Activated T-helper 1 cell treated with anti-CD3 and anti-CD28 coated beads, Interleukin-12 subunit alpha, Interleukin-12 subunit beta, Interleukin-2, Interleukin-4 antibody, amounts not matched to agents 30 ng/mL and 10 ng/mL and 1 ng/mL, durations not matched to agents 14 hours and 24 hours and 36 hours (primary cell): ENCODE measurements at regions of chr3 and their contacts with region 1.

Region 1: GRCh38 chr3:30437171-30437601 is 169.2 kb upstream of the TGFBR2 start:
- DNase-seq: no peak
- H3K4me3 Mint-ChIP-seq: no peak overlapping the region
- H3K27ac Mint-ChIP-seq: no peak overlapping the region
- H3K4me1 Mint-ChIP-seq: peaks cover 24% of the 10 kb centered on the region
- H3K27me3 Mint-ChIP-seq: no peaks in the 10 kb centered on the region

Region 2: GRCh38 chr3:30112902-30113484 is 324.2 kb before region 1 on chr3:
- intact Hi-C with region 1: loop called (anchors 10 kb)
- DNase-seq: no peak
- H3K4me3 Mint-ChIP-seq: no peak overlapping the region
- H3K27ac Mint-ChIP-seq: no peak overlapping the region
- H3K4me1 Mint-ChIP-seq: peaks cover 4% of the 10 kb centered on the region
- H3K27me3 Mint-ChIP-seq: peaks cover 12% of the 10 kb centered on the region

Region 3: DNA sequence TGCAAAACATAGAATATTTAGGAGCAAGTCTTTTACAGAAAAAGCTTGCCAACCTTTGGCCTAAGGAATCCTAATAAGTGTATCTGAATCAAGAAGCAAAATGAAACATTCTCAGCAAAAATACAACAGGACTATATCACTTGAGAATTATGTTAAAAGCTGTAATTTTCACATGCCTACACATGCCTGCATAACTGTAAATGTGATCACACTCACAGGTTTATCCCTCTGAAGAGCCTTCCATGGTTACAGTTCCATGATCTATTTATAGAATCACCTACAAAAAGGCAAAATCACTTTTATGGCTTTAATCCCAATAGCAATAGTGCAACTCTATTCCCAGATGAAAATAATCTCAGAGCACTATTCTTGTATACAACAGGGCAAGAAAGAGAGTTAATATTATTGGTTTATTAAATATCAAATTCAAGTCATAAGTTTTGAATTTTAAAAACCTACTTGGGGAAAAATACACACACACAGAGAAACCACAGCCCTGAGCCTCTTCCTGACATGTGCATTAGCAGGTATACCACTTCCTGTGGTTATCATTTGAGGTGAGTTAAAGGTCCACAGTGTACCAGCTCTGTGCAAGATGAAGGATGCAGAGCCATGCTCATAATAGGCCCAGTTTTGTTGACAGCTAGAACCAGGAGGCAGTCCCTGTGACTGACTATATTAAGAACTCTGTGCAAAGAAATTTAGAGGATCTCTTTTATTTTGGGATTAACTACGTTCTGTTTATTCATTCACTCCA is 83.3 kb before region 1 on chr3:
- intact Hi-C with region 1: loop called (anchors 5 kb)
- DNase-seq: peak; percentile 70
- H3K4me3 Mint-ChIP-seq: peak overlapping the region; percentile 27
- H3K27ac Mint-ChIP-seq: peak overlapping the region; percentile 70
- H3K4me1 Mint-ChIP-seq: peaks cover 85% of the 10 kb centered on the region
- H3K27me3 Mint-ChIP-seq: peaks cover 14% of the 10 kb centered on the region